ENCODE measurements at regions of chr15 and their contacts with region 1.

Region 1: GRCh38 chr15:60179786-60180391 is 175.8 kb downstream of the FOXB1 start:
- DNase-seq: peak; percentile 21
- H3K4me3 Mint-ChIP-seq: no peak overlapping the region
- H3K27ac Mint-ChIP-seq: no peak overlapping the region
- H3K4me1 Mint-ChIP-seq: no peaks in the 10 kb centered on the region
- H3K27me3 Mint-ChIP-seq: peaks cover 21% of the 10 kb centered on the region

Region 2: GRCh38 chr15:59725172-59725486 is 454.8 kb before region 1 on chr15:
- CTCF ChIA-PET with region 1: interaction called, 26 read pairs
- POLR2A ChIA-PET with region 1: no interaction called
- intact Hi-C with region 1: loop called (anchors 10 kb)
- DNase-seq: no peak
- H3K4me3 Mint-ChIP-seq: no peak overlapping the region
- H3K27ac Mint-ChIP-seq: no peak overlapping the region
- H3K4me1 Mint-ChIP-seq: no peaks in the 10 kb centered on the region
- H3K27me3 Mint-ChIP-seq: peaks cover 7% of the 10 kb centered on the region

Region 3: GRCh38 chr15:59751552-59752413 is 428.1 kb before region 1 on chr15:
- CTCF ChIA-PET with region 1: interaction called, 16 read pairs
- POLR2A ChIA-PET with region 1: no interaction called
- intact Hi-C with region 1: loop called (anchors 10 kb)
- DNase-seq: no peak
- H3K4me3 Mint-ChIP-seq: no peak overlapping the region
- H3K27ac Mint-ChIP-seq: no peak overlapping the region
- H3K4me1 Mint-ChIP-seq: peaks cover 8% of the 10 kb centered on the region
- H3K27me3 Mint-ChIP-seq: no peaks in the 10 kb centered on the region

Region 4: DNA sequence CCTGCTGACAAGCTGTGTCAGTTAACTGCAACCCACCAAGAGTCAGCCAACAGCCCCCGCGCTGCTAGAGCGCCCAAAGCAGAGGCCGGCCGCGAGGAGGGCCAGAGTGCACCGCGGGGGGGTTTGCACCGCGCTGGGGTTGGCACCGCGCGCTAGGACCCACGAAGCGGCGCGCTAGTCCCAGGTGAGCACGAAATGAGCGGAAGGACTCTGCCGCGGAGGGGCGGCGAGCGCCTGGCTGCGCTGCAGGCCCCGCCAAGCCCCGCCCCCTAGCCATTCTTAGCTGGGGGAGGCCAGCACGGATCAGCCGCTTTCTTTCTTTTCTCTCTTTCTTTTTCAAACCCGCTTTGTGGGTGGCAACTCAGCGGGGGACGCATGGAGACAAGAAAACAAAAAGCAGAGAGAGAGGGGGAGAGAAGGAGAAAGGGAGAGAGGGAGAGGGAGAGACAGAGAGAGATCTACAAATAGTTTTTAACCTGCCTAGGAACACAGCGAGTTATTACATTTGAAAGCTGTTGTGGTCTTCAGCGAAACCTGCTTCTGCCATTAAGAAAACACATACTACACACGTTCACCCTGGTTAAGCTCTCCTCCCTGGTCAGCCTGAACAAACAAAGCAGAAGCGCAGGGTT is 182.7 kb before region 1 on chr15:
- CTCF ChIA-PET with region 1: interaction called, 13 read pairs
- POLR2A ChIA-PET with region 1: no interaction called
- intact Hi-C with region 1: loop called (anchors 1 kb)
- DNase-seq: peak; percentile 80
- H3K4me3 Mint-ChIP-seq: peak overlapping the region; percentile 68
- H3K27ac Mint-ChIP-seq: peak overlapping the region; percentile 14
- H3K4me1 Mint-ChIP-seq: peaks cover 51% of the 10 kb centered on the region
- H3K27me3 Mint-ChIP-seq: peaks cover 96% of the 10 kb centered on the region

Region 5: DNA sequence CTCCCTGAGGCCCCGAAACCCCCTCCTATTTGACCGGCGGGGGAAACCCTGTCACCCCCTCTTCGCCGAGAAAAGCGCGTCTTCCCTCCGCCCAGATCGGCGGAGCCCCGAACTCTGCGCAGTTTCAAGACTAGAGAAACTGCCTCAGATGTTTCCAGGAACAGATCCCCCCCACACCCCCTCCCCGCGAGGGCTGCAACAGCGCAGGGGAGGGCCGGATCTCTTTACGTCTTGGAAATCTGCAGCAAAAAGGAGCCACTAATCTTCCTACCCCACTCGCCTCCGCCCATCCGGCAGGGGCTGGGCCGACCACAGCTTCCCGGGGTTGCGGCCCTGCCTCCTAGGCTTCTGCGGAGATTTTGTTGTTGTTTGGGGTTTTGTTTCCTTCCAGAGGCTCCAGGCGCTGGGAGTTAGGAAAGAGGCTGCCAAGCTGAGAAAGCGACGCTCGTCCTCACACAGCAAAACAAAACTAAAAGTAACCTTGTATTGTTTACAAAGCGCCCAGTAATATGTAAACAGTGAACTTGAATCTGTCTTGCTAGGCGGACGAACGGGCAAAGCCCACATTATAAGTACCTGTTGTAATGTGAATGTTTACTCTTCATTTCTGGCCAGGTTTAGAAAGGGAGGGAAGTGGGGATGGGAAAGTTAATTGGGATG is 173.6 kb before region 1 on chr15:
- CTCF ChIA-PET with region 1: interaction called, 25 read pairs
- POLR2A ChIA-PET with region 1: no interaction called
- intact Hi-C with region 1: no loop called
- DNase-seq: peak; percentile 87
- H3K4me3 Mint-ChIP-seq: peak overlapping the region; percentile 84
- H3K27ac Mint-ChIP-seq: peak overlapping the region; percentile 77
- H3K4me1 Mint-ChIP-seq: peaks cover 45% of the 10 kb centered on the region
- H3K27me3 Mint-ChIP-seq: peaks cover 85% of the 10 kb centered on the region

Measured in activated CD4-positive, alpha-beta memory T cell treated with anti-CD3 and anti-CD28 coated beads for 36 hours (primary cell).